ENCODE measurements at regions of chr18 and their contacts with region 1.

Region 1: GRCh38 chr18:31990823-31991222 is 27.8 kb upstream of the RNF125 start:
- DNase-seq: peak; percentile 62
- ATAC-seq: peak; percentile 100
- H3K4me3 ChIP-seq: no peak overlapping the region
- H3K27ac ChIP-seq: no peak overlapping the region
- H3K4me1 ChIP-seq: peaks cover 12% of the 10 kb centered on the region
- H3K27me3 ChIP-seq: no peaks in the 10 kb centered on the region
- CTCF ChIP-seq: no peak
- EP300 ChIP-seq: no peak
- POLR2A ChIP-seq: no peak
- RAD21 ChIP-seq: no peak

Region 2: DNA sequence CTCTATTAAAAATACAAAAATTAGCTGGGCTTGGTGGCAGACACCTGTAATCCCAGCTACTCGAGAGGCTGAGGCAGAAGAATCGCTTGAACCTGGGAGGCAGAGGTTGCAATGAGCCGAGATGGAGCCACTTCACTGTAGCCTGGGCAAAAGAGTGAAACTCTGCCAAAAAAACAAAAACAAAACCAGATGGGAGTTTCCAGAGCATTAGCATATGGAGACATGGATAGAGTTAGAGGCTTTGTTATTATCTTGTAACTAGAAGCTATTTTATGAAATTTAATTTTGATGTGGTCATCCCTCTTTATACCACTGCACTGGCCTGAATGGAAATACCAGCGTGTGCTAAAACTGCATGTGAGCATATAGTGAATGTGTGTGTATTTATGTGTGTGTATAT is 106.8 kb before region 1 on chr18:
- CTCF ChIA-PET with region 1: no interaction called
- POLR2A ChIA-PET with region 1: no interaction called
- RAD21 ChIA-PET with region 1: no interaction called
- SMC1A ChIA-PET with region 1: no interaction called
- in situ Hi-C with region 1: no loop called
- intact Hi-C with region 1: no loop called
- DNase-seq: no peak
- ATAC-seq: no peak
- H3K4me3 ChIP-seq: no peak overlapping the region
- H3K27ac ChIP-seq: no peak overlapping the region
- H3K4me1 ChIP-seq: no peaks in the 10 kb centered on the region
- H3K27me3 ChIP-seq: no peaks in the 10 kb centered on the region
- CTCF ChIP-seq: no peak
- EP300 ChIP-seq: no peak
- POLR2A ChIP-seq: no peak
- RAD21 ChIP-seq: no peak

Region 3: DNA sequence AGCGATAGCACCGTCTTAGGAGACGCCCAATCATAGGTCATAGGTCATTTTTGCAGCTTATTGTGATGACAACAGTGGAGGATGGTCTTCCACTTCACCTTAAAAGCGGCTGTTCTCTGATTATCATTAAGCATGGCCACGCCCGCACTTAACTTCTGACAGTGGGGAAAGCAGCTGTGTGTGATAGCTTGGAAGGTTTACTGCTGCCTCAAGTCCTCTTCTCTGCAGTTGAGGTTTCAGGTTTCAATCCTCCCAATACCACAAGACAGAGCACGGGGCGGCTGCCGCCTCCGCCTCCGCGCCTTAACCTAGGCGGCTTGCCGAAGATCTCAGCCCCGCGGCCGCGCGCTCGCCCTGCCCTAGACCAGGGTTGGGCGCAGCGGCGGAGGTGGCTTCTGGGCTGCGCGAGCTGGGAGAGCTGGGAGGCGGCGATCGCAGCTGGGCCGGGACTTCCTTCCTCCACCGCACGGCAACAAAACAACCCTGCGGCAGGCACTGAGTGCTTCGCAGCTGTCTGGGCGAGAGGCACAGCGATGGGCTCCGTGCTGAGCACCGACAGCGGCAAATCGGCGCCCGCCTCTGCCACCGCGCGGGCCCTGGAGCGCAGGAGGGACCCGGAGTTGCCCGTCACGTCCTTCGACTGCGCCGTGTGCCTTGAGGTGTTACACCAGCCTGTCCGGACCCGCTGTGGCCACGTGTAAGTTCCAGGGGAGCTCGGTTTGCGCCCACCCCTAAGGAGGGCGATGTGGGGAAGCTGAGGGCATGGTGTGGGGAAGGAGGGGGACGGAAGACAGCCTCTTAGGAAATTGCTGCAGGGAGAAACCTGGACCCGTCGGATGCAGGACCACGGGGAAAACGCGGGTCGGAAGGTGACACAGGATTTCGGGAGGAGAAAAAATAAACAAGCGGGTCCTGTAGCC is 27.8 kb after region 1 on chr18 and contains the start of gene RNF125:
- CTCF ChIA-PET with region 1: interaction called, 3 read pairs
- POLR2A ChIA-PET with region 1: no interaction called
- RAD21 ChIA-PET with region 1: no interaction called
- SMC1A ChIA-PET with region 1: interaction called, 3 read pairs
- in situ Hi-C with region 1: no loop called
- intact Hi-C with region 1: loop called (anchors 2 kb)
- DNase-seq: peak; percentile 69
- ATAC-seq: peak; percentile 92
- H3K4me3 ChIP-seq: peak within 1 kb of the TSS; percentile 87
- H3K27ac ChIP-seq: peak within 1 kb of the TSS; percentile 59
- H3K4me1 ChIP-seq: peaks cover 10% of the 10 kb centered on the region
- H3K27me3 ChIP-seq: no peaks in the 10 kb centered on the region
- CTCF ChIP-seq: no peak
- EP300 ChIP-seq: 0 out of 4 replicates have a peak, but pooled peaks of 1 of the 2 experiments have one; percentile 7
- POLR2A ChIP-seq: peak; percentile 90
- RAD21 ChIP-seq: no peak
- polyA plus RNA-seq, gene RNF125: 0.79 to 1.3 TPM

Region 4: GRCh38 chr18:32078845-32079244 is 88.0 kb after region 1 on chr18:
- CTCF ChIA-PET with region 1: no interaction called
- POLR2A ChIA-PET with region 1: no interaction called
- RAD21 ChIA-PET with region 1: no interaction called
- SMC1A ChIA-PET with region 1: no interaction called
- in situ Hi-C with region 1: no loop called
- intact Hi-C with region 1: no loop called
- DNase-seq: no peak
- ATAC-seq: no peak
- H3K4me3 ChIP-seq: no peak overlapping the region
- H3K27ac ChIP-seq: no peak overlapping the region
- H3K4me1 ChIP-seq: no peaks in the 10 kb centered on the region
- H3K27me3 ChIP-seq: no peaks in the 10 kb centered on the region
- CTCF ChIP-seq: no peak
- EP300 ChIP-seq: no peak
- POLR2A ChIP-seq: no peak
- RAD21 ChIP-seq: no peak